ENCODE measurements at regions of chr11 and their contacts with region 1.

Region 1: DNA sequence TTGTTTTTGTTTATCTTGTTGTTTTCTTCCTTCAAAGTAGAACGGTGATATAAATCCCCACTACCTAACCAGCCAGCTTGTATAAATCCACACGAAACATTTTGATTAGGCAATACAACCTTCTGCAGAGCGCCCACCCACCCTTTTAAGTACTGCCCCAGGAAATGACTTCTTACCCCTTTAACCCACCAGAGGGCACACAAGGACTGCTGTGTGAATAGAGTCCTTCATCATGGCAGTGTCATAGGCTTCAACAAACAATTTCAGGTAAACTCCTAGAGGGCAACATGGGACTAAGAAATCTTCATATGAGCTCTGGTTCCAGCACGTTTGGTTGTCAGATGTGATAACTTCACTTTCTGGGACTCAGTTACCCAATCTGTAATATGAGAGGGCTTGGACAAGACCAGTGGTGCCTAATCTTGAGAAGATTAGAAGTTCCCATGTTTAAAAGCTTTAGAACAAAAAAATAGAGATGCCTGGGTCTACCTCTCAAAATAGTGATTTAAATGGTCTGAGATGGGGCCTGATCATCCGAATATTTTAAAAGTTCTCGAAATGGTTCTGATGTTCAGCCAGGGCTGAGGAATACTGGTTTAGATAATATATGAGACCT is 56.1 kb downstream of the PIWIL4 start:
- ATAC-seq: peak; percentile 84 to 98 (median 92)
- H3K4me3 ChIP-seq: no peak overlapping the region
- H3K27ac ChIP-seq: no peak overlapping the region
- H3K4me1 ChIP-seq: no peaks in the 10 kb centered on the region

Region 2: GRCh38 chr11:94731880-94732601 is 108.8 kb after region 1 on chr11:
- in situ Hi-C with region 1: loop called in 1 of 9 experiments (anchors 10 kb)
- ATAC-seq: peak; percentile 42 to 99 (median 70)
- H3K4me3 ChIP-seq: no peak overlapping the region
- H3K27ac ChIP-seq: no peak overlapping the region
- H3K4me1 ChIP-seq: peaks cover 0 to 8% of the 10 kb centered on the region in 2 donors

Region 3: DNA sequence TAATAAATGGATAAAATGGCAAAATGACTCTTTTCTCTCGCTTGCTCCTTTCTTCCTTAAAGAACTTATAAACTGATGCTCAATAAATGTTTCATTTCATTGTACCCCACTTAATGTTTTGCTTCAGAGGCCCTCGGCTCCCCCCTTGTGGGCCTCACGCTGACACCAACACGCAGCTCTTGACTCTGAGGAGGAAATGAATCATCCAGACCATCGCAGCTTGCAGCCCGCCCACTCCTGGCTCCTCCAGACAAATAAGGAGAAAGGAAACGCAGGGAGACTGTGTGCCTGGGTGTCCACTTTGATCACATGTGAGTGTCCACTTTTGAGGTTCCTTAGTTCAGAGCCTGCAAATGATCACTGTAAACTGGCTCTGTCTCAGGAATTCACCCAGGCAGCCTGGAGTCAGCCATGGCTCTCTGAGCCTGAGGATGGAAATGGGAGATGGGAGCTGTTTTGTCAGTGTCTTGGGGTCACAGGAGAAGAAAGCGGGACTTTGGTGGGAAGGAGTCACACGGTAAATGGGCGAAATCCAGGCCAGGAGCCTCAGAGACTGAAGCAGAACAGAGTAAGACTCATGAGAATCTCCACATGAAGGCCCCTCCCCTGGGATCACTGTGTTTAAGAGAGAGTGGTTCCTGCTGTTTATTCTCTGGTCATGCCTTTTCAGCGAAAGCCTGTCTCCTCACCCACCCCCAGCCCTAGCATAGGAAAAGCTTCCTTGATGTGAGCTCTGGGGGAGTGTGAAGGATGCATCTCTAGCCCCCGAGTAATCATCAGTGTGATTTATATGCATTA is 253.6 kb after region 1 on chr11:
- in situ Hi-C with region 1: loop called in 2 of 9 experiments (anchors 25 kb)
- ATAC-seq: peak; percentile 96 to 100 (median 100)
- H3K4me3 ChIP-seq: no peak overlapping the region
- H3K27ac ChIP-seq: peak overlapping the region; percentile 36 to 44
- H3K4me1 ChIP-seq: peaks cover 13 to 18% of the 10 kb centered on the region in 2 donors

Region 4: GRCh38 chr11:94910779-94911178 is 287.6 kb after region 1 on chr11:
- in situ Hi-C with region 1: loop called in 1 of 9 experiments (anchors 25 kb)
- ATAC-seq: peak in 3 of 8 experiments; percentile 63 to 90 (median 88)
- H3K4me3 ChIP-seq: no peak overlapping the region
- H3K27ac ChIP-seq: no peak overlapping the region
- H3K4me1 ChIP-seq: no peaks in the 10 kb centered on the region